OCI-LY7 (cell line): ENCODE measurements at regions of chr12 and their contacts with region 1.

Region 1: GRCh38 chr12:128840862-128841468 is 12.3 kb upstream of the GLT1D1 start:
- DNase-seq: peak; percentile 64
- H3K4me3 ChIP-seq: peak overlapping the region; percentile 26
- H3K27ac ChIP-seq: peak overlapping the region; percentile 15
- H3K4me1 ChIP-seq: peaks cover 33% of the 10 kb centered on the region
- CTCF ChIP-seq: no peak

Region 2: GRCh38 chr12:128800606-128801005 is 40.4 kb before region 1 on chr12:
- CTCF ChIA-PET with region 1: no interaction called
- POLR2A ChIA-PET with region 1: no interaction called
- intact Hi-C with region 1: no loop called
- DNase-seq: no peak
- H3K4me3 ChIP-seq: no peak overlapping the region
- H3K27ac ChIP-seq: no peak overlapping the region
- H3K4me1 ChIP-seq: peaks cover 67% of the 10 kb centered on the region
- CTCF ChIP-seq: no peak

Region 3: DNA sequence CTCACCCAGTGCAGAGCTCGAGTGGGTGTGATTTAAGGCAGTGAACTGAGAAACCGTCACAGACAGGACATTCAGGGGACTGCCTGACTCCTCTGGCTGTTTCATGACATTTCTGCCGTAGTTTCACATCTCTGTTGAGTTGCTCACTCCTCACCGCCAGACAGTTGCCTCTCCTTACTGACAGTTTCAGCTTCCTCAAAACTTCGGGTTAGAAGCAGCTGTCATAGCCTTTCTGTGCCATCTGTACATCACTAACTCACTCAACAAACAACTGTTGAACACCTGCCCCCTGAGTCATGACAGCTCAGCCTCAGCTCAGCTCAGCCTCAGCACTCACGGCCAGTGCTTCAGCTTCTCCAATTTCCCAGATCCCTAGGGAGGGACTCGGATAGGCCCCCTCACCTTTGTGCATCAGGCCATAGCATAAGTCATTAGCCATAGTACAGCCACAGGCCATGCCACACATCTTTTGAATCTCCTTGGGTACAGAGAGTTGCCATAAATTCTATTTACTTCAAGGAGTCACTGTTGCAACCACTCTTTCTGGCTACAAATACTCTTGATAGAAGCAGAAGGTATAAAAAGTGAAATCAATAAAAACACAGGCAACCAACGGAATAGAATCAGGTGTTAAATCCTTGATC is 11.0 kb before region 1 on chr12:
- CTCF ChIA-PET with region 1: no interaction called
- POLR2A ChIA-PET with region 1: interaction called, 9 read pairs
- intact Hi-C with region 1: loop called (anchors 1 kb)
- DNase-seq: peak; percentile 95
- H3K4me3 ChIP-seq: peak overlapping the region; percentile 44
- H3K27ac ChIP-seq: peak overlapping the region; percentile 92
- H3K4me1 ChIP-seq: peaks cover 61% of the 10 kb centered on the region
- CTCF ChIP-seq: no peak

Region 4: DNA sequence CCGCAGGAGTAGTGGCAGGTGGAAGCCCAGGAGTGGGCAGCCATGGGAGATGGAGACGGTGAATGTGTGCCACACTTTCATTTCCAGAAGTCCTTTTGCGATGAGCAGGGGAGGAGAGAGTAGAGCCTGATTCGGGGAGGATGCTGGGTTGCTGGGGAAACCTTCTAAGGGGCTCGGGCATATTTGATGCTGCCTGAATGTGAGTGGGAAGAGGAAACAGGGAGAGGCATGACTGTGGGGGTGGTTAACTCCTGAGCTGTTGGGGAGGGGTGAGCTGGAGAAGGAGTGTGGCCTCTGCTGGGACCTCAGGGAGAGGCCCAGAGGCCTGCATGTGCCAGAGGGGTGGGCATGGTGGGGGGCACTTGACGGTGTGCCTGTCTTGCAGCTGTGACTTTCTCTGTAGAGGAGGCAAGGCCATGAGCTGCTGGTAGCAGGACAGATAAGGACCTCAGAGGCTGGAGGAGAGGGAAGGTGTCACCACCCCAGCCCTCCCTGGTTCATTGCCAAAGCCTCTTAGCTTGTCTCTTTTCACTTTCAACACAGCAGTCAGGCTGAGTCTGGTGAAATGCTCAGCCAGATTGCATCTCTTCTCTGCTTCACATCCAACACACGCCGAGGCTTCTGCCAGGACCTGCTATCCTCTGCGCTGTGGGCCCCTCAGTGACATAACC is 23.7 kb after region 1 on chr12:
- CTCF ChIA-PET with region 1: no interaction called
- POLR2A ChIA-PET with region 1: no interaction called
- intact Hi-C with region 1: no loop called
- DNase-seq: no peak
- H3K4me3 ChIP-seq: no peak overlapping the region
- H3K27ac ChIP-seq: no peak overlapping the region
- H3K4me1 ChIP-seq: no peaks in the 10 kb centered on the region
- CTCF ChIP-seq: no peak